Cardiac septum (tissue), 1 donor: ENCODE measurements at regions of chr18 and their contacts with region 1.

Region 1: GRCh38 chr18:36296650-36297416 is 680 bp upstream of the FHOD3 start:
- DNase-seq: peak; percentile 86

Region 2: GRCh38 chr18:36366994-36367839 is 70.4 kb after region 1 on chr18:
- intact Hi-C with region 1: loop called (anchors 5 kb)
- DNase-seq: peak; percentile 89

Region 3: GRCh38 chr18:36411745-36412168 is 114.9 kb after region 1 on chr18:
- intact Hi-C with region 1: loop called (anchors 5 kb)
- DNase-seq: no peak

Region 4: GRCh38 chr18:36441426-36442240 is 144.8 kb after region 1 on chr18:
- intact Hi-C with region 1: no loop called
- DNase-seq: no peak

Region 5: GRCh38 chr18:36468161-36468560 is 171.3 kb after region 1 on chr18:
- intact Hi-C with region 1: loop called (anchors 5 kb)
- DNase-seq: peak; percentile 86

Region 6: GRCh38 chr18:36572135-36572856 is 275.5 kb after region 1 on chr18:
- intact Hi-C with region 1: loop called (anchors 2 kb)
- DNase-seq: no peak

Region 7: GRCh38 chr18:36661999-36662398 is 365.2 kb after region 1 on chr18:
- intact Hi-C with region 1: loop called (anchors 10 kb)
- DNase-seq: no peak

Region 8: GRCh38 chr18:36809590-36810381 is 513.0 kb after region 1 on chr18:
- intact Hi-C with region 1: loop called (anchors 5 kb)
- DNase-seq: no peak

Region 9: DNA sequence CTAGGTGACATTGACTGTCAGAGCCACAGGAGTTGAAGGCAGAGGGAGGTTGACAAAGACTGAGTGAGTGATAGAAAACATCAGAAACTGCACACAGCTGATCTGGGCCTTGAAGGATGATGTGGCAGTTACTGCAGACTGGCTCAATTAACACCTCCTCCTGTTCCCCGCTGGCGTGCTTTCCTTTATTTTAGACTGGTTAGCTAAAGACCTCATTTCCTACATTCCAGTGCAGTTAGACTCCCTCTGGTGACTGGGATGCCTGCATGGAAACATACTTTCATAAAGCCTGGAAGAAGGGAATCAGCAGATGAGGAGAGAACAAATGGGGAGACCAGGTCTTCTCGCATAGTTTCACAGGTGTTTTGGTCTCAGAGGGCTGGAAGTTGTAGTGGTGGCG is 524.8 kb after region 1 on chr18:
- intact Hi-C with region 1: no loop called
- DNase-seq: no peak